ENCODE measurements at regions of chr11 and their contacts with region 1.

Region 1: GRCh38 chr11:64225612-64226506 is at the starts of genes NUDT22 and TRPT1:
- DNase-seq: peak; percentile 96
- H3K4me3 ChIP-seq: peak within 1 kb of the TSS; percentile 71 to 89 (median 80)
- H3K27ac ChIP-seq: peak within 1 kb of the TSS; percentile 89 to 94 (median 92)
- H3K4me1 ChIP-seq: peaks cover 0 to 53% (median 38%) of the 10 kb centered on the region in 4 donors
- H3K27me3 ChIP-seq: no peaks in the 10 kb centered on the region
- CTCF ChIP-seq: peak in 1 of 4 experiments; percentile 18
- EP300 ChIP-seq: no peak
- POLR2A ChIP-seq: peak; percentile 90 to 95
- total RNA-seq, gene NUDT22: 41.4 to 64.8 (median 50.1) TPM
- total RNA-seq, gene TRPT1: 45.7 to 80.6 (median 62.9) TPM

Region 2: GRCh38 chr11:64146036-64146962 is 79.6 kb before region 1 on chr11:
- intact Hi-C with region 1: no loop called
- DNase-seq: no peak
- H3K4me3 ChIP-seq: no peak overlapping the region
- H3K27ac ChIP-seq: peak overlapping the region in 2 of 4 donors; percentile 76 to 80
- H3K4me1 ChIP-seq: peaks cover 2 to 64% (median 37%) of the 10 kb centered on the region in 4 donors
- H3K27me3 ChIP-seq: no peaks in the 10 kb centered on the region
- CTCF ChIP-seq: peak in 3 of 4 experiments; percentile 26 to 46 (median 42)
- EP300 ChIP-seq: no peak
- POLR2A ChIP-seq: no peak

Region 3: DNA sequence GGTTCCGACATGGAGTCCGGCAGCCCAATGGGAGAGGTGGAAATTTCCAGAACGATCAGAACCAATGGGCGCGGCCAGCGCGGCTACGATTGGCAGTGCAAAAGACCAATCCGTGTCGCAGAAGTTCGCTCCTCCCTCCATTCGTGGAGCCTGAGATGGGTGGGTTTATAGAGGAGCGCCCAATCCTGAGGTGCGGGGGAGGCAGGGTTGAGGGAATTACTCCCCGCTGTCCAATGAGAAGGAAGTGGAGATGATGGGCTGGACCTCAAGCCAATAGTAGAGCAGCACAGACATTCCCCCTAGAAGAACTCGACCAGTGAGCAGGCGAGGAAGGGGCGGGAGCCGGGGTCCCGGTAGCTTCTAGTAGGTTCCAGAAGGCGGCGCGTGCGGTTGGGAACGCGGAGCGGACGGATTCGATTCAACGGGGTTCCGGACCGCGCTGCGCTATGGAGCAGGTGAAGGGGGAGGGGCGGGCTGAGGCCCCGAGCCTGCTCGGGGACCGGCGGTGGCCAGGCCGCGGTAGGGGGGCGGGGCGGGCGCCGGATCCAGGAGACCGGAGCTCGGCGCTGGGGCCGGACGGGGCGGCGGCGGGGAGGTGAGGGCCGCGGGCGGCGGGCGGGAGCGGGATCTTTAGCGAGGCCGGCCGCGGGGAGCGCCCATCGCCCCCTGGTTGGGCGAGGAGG is 39.9 kb before region 1 on chr11 and contains the start of gene STIP1:
- intact Hi-C with region 1: loop called (anchors 5 kb)
- DNase-seq: peak; percentile 100
- H3K4me3 ChIP-seq: peak within 1 kb of the TSS; percentile 58 to 66 (median 59)
- H3K27ac ChIP-seq: peak within 1 kb of the TSS; percentile 92 to 97 (median 94)
- H3K4me1 ChIP-seq: peaks cover 0 to 62% (median 42%) of the 10 kb centered on the region in 4 donors
- H3K27me3 ChIP-seq: no peaks in the 10 kb centered on the region
- CTCF ChIP-seq: peak in 2 of 4 experiments; percentile 17 to 27
- EP300 ChIP-seq: no peak
- POLR2A ChIP-seq: peak; percentile 46 to 60
- total RNA-seq, gene STIP1: 58.2 to 90.3 (median 81.0) TPM

Measured in sigmoid colon (tissue), 7 donors.